Left ventricle myocardium inferior (tissue), 1 donor: ENCODE measurements at regions of chr13 and their contacts with region 1.

Region 1: DNA sequence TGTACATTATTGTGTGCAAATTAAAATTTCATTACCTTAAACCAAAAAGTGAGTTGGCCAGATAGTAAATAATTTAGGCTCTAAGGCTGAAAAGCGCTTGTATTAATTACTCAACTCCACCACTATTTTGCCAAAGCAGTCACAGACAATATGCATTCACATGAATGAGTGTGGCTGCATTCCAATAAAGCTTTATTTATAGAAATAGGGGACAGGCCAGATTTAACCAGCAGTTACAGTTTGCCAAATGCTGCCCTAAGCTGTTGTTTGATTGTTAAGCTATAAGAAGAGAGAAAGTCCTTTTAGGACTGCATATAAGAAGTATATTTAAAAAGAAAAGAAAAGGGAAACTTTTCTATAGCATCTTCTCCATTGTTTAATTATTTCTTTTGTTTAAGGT is 342.6 kb downstream of the ITGBL1 start:
- DNase-seq: no peak
- H3K4me3 ChIP-seq: no peak overlapping the region
- H3K27ac ChIP-seq: peak overlapping the region; percentile 54
- H3K4me1 ChIP-seq: peaks cover 35% of the 10 kb centered on the region
- H3K27me3 ChIP-seq: no peaks in the 10 kb centered on the region
- CTCF ChIP-seq: no peak

Region 2: GRCh38 chr13:101673360-101674105 is 121.5 kb before region 1 on chr13:
- intact Hi-C with region 1: no loop called
- DNase-seq: no peak
- H3K4me3 ChIP-seq: no peak overlapping the region
- H3K27ac ChIP-seq: no peak overlapping the region
- H3K4me1 ChIP-seq: no peaks in the 10 kb centered on the region
- H3K27me3 ChIP-seq: no peaks in the 10 kb centered on the region
- CTCF ChIP-seq: no peak

Region 3: GRCh38 chr13:101916108-101916757 is 121.2 kb after region 1 on chr13:
- intact Hi-C with region 1: loop called (anchors 10 kb)
- DNase-seq: peak; percentile 38
- H3K4me3 ChIP-seq: peak overlapping the region; percentile 67
- H3K27ac ChIP-seq: no peak overlapping the region
- H3K4me1 ChIP-seq: peaks cover 31% of the 10 kb centered on the region
- H3K27me3 ChIP-seq: peaks cover 85% of the 10 kb centered on the region
- CTCF ChIP-seq: peak; percentile 57

Region 4: GRCh38 chr13:101977475-101977874 is 182.4 kb after region 1 on chr13:
- intact Hi-C with region 1: no loop called
- DNase-seq: no peak
- H3K4me3 ChIP-seq: no peak overlapping the region
- H3K27ac ChIP-seq: peak overlapping the region; percentile 23
- H3K4me1 ChIP-seq: peaks cover 36% of the 10 kb centered on the region
- H3K27me3 ChIP-seq: no peaks in the 10 kb centered on the region
- CTCF ChIP-seq: no peak